Naive thymus-derived CD4-positive, alpha-beta T cell (primary cell): ENCODE measurements at regions of chr19 and their contacts with region 1.

Region 1: DNA sequence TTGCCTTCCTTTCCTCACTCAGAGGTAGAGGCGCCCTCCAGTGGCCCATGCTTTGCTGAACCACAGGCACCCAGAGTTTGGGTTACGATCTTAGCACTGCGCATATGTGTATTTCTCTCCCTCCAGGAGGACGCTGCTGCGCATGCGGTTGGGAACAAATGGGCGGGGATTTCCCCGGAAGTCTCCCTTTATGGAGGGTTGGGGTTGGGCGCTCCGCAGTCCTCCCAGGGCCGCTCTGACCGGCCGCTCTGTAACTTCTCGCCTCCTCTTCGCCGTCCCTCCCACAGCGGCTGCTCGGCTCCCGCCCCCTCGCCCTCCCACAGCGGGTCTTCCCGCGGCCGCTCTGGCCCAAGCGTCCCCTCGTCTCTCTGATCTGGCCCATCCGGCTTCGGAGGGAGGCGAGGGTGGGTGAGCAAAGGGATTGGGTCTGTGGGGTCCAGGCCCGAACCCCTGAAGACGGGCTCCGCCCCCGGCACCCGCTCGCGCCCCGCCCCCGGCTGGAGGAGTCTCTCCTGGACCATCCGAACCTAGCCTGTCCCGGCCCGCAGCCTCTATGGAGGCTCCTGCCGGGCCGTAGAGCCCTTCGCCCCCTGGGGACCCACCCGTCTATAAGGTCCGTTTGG is at the start of gene MEGF8:
- DNase-seq: peak; percentile 86 to 99 (median 97)
- ATAC-seq: peak; percentile 96
- H3K4me3 ChIP-seq: peak within 1 kb of the TSS; percentile 95
- H3K4me3 Mint-ChIP-seq: peak within 1 kb of the TSS; percentile 89 to 96 (median 94)
- H3K27ac ChIP-seq: peak within 1 kb of the TSS; percentile 84
- H3K27ac Mint-ChIP-seq: peak within 1 kb of the TSS; percentile 51 to 93 (median 83)
- H3K4me1 ChIP-seq: peaks cover 6 to 7% of the 10 kb centered on the region in 2 donors
- H3K4me1 Mint-ChIP-seq: peaks cover 13 to 29% (median 22%) of the 10 kb centered on the region in 7 donors
- H3K27me3 ChIP-seq: peaks cover 0 to 4% of the 10 kb centered on the region in 2 donors
- H3K27me3 Mint-ChIP-seq: peaks cover 6 to 33% (median 16%) of the 10 kb centered on the region in 5 donors
- total RNA-seq, gene MEGF8: 6.7 to 9.3 (median 8.6) TPM

Region 2: GRCh38 chr19:41734617-41735016 is 590.8 kb before region 1 on chr19:
- CTCF ChIA-PET with region 1: no interaction called
- POLR2A ChIA-PET with region 1: no interaction called
- intact Hi-C with region 1: no loop called
- DNase-seq: no peak
- ATAC-seq: no peak
- H3K4me3 ChIP-seq: no peak overlapping the region
- H3K4me3 Mint-ChIP-seq: no peak overlapping the region
- H3K27ac ChIP-seq: no peak overlapping the region
- H3K27ac Mint-ChIP-seq: no peak overlapping the region
- H3K4me1 ChIP-seq: no peaks in the 10 kb centered on the region
- H3K4me1 Mint-ChIP-seq: peaks cover 0 to 6% (median 4%) of the 10 kb centered on the region in 7 donors
- H3K27me3 ChIP-seq: no peaks in the 10 kb centered on the region
- H3K27me3 Mint-ChIP-seq: peaks cover 18 to 49% (median 29%) of the 10 kb centered on the region in 5 donors

Region 3: DNA sequence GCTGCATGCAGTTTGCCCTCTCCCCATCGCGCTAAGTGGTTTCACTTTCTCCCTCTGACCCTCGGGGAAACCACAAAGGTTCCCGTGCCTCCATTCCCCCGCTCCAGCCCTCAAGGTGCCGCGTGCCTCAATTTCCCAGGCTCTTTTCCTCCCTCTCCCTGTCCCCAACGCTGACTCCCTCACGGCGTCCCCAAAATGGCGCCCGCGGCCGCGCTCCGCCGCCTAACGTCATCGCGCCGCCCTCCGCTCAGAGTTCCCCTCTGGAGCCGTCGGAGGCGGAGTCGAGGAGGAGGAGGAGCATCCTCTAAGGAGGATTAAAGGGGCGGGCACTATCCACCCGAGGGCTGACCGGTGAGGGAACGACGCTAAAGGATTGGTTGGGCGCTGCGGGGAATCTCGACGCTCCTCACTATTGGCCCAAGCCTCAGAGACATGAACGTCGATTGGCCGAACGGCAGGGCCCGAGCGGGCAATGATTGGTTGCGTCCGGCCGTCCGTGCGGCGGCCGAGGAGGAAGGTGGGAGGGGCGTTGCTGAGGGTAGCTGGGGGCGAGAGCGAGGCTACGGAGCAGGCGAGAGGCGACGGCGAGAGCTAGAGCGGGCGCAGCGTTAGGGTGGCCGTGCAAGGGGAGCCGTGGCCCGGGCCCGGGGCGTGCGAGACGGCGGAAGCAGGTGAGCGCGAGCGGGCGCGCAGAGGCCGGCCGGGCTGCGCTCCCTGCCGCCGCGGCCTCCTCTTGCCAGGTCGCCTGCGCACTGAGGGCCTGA is 249.6 kb before region 1 on chr19 and contains the start of gene ZNF574:
- CTCF ChIA-PET with region 1: no interaction called
- POLR2A ChIA-PET with region 1: no interaction called
- intact Hi-C with region 1: loop called (anchors 1 kb)
- DNase-seq: peak; percentile 91 to 99 (median 98)
- ATAC-seq: peak; percentile 98
- H3K4me3 ChIP-seq: peak within 1 kb of the TSS; percentile 70
- H3K4me3 Mint-ChIP-seq: peak within 1 kb of the TSS; percentile 92 to 100 (median 98)
- H3K27ac ChIP-seq: peak within 1 kb of the TSS; percentile 97
- H3K27ac Mint-ChIP-seq: peak within 1 kb of the TSS; percentile 99 to 100 (median 100)
- H3K4me1 ChIP-seq: peaks cover 19 to 24% of the 10 kb centered on the region in 2 donors
- H3K4me1 Mint-ChIP-seq: peaks cover 26 to 44% (median 38%) of the 10 kb centered on the region in 7 donors
- H3K27me3 ChIP-seq: no peaks in the 10 kb centered on the region
- H3K27me3 Mint-ChIP-seq: peaks cover 0 to 13% (median 0%) of the 10 kb centered on the region in 5 donors
- total RNA-seq, gene ZNF574: 17.6 to 26.7 (median 20.9) TPM

Region 4: DNA sequence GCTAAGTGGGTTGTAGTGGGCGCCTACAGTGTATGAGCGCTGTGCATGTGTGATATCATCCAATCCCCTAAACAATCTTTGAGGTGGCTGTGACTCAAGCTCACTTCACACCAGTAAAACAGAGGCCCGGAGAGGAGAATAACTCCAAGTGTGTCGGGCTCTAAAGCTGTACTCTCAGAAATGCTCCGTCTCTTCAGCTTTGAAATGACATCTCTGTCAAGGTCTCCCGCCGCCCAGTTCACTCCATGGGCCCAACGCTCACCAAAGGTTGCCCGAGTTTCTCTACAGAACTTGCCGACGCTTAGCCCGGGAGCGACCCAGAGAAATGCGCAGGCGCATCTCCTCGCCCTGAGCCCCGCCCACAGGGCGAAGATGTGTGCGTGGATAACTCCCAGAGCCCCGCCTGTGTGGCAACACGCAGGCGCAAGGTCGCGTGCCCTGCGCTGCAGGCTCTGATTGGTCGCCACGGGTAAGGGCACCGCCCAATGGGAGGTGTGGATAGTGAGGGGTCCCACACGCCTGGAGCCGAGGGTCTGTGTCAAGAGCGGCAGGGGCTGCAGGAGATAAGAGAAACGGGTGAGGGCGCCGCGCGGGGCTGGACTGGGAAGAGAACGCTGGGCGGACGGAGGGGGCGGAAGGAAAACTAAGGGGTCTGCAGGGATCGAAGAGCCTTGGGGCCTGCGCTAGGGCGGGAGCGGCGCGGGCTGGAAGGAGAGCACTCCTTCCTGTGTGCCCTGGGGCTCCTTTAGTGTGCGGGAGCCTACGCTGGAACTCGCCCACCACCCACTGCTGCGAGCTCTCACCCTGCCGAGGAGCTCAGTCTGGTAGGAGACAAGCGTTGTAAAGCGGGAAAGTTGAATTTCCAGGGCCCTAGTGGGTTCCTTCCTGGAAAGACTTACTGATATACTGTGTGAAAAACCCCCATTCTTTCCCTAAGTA is 105.3 kb before region 1 on chr19 and contains the start of gene ZNF526:
- CTCF ChIA-PET with region 1: no interaction called
- POLR2A ChIA-PET with region 1: no interaction called
- intact Hi-C with region 1: loop called (anchors 1 kb)
- DNase-seq: peak; percentile 92 to 97 (median 96)
- ATAC-seq: peak; percentile 88
- H3K4me3 ChIP-seq: peak within 1 kb of the TSS; percentile 72
- H3K4me3 Mint-ChIP-seq: peak within 1 kb of the TSS; percentile 95 to 99 (median 98)
- H3K27ac ChIP-seq: peak within 1 kb of the TSS; percentile 88
- H3K27ac Mint-ChIP-seq: peak within 1 kb of the TSS; percentile 88 to 98 (median 95)
- H3K4me1 ChIP-seq: peaks cover 37 to 43% of the 10 kb centered on the region in 2 donors
- H3K4me1 Mint-ChIP-seq: peaks cover 46 to 62% (median 55%) of the 10 kb centered on the region in 7 donors
- H3K27me3 ChIP-seq: no peaks in the 10 kb centered on the region
- H3K27me3 Mint-ChIP-seq: peaks cover 0 to 3% (median 0%) of the 10 kb centered on the region in 5 donors
- total RNA-seq, gene ZNF526: 8.6 to 25.2 (median 22.7) TPM

Region 5: DNA sequence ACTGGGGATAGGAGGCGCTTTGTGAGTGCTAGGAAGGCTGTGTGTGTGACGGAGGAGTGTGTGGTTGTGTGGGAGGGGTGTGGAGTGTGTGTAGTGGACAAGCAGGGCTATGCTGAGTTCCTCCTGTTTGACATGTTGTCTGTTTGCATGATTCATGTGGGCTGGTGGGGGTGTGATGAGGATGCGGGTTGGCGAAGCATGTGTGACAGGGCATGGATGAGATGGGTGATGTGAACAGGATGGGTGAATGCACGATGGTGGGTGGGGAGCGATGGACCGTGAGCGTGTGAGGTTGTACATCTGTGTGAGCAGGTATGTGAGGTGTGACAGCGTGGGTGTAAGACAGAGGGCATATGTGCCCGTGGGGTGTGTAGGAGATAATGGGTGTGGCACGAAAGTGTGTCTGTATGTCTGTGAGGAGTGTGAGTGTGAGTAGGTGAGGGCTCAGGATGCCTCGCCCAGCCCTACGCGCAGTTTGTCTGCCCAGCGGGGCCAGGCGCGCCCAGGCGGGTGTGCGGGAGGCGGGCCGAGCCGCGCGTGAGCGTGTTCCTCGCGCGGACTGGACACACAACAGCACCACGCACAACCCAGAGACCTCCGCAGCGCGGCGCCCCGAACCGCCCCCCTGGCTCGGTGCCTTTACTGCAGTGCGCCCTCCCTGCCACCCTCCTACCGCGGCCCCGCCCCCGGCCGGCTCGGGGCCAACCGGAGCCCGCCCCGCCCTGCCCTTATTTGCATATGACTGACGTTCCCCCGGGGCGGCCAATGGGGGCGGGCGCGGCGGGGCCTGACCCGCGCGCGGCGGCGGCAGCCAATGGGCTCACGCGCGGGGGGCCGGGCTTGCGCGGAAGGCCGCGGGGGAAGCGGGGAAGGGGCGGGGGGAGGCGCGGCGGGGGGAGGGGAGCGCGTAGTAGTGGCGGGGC is 42.0 kb before region 1 on chr19:
- CTCF ChIA-PET with region 1: no interaction called
- POLR2A ChIA-PET with region 1: interaction called, 3 read pairs
- intact Hi-C with region 1: loop called (anchors 1 kb)
- DNase-seq: peak; percentile 93 to 97 (median 95)
- ATAC-seq: peak; percentile 83
- H3K4me3 ChIP-seq: peak overlapping the region; percentile 50
- H3K4me3 Mint-ChIP-seq: peak overlapping the region in 1 of 10 donors; percentile 0
- H3K27ac ChIP-seq: peak overlapping the region; percentile 83
- H3K27ac Mint-ChIP-seq: no peak overlapping the region
- H3K4me1 ChIP-seq: peaks cover 42 to 45% of the 10 kb centered on the region in 2 donors
- H3K4me1 Mint-ChIP-seq: peaks cover 22 to 44% (median 32%) of the 10 kb centered on the region in 7 donors
- H3K27me3 ChIP-seq: no peaks in the 10 kb centered on the region
- H3K27me3 Mint-ChIP-seq: no peaks in the 10 kb centered on the region

Region 6: DNA sequence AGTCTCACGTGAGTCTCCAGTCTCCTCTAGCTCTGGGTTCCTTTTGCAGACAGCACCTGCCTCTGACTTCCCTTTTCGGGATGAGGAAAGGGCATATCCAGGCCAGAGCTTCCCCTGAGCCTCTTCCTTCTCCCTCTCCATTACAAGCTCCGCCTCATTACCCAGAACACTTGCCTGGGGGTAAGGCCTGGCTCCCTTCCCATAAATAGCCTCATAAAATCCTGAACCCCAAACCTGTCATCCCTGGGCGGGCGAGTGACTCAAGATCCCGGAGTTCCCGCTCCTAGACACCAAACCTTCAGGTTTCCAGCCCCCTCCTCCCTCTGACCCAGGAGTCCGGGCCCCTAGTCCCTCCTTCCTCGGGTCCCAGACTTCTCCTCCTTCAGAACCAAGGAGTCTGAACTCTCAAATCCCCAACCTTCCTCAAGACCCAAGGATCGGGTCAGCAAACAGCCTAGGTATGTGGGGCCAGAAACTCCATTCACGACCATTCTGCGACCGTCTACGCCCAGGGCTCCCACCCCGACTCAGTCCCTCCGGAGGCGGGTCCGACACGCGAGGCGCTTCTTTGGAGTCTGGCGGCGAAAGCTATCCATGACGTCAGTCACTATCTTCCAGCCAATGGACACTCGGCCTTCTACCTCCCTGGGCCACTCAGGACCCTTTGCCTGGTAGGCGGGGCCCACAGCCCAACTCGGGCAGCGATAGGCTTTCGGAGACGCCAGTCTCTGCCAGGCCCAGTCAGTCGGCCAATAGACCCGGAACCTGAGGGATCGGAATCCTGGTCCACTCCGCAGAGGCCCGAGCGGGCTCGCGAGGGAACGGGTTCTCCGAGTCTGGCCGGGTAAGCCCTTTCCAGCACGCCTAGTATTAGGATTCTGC is 71.2 kb after region 1 on chr19:
- CTCF ChIA-PET with region 1: no interaction called
- POLR2A ChIA-PET with region 1: no interaction called
- intact Hi-C with region 1: loop called (anchors 1 to 5 kb)
- DNase-seq: peak; percentile 80 to 97 (median 84)
- ATAC-seq: peak; percentile 96
- H3K4me3 ChIP-seq: peak overlapping the region; percentile 93
- H3K4me3 Mint-ChIP-seq: peak overlapping the region; percentile 85 to 99 (median 91)
- H3K27ac ChIP-seq: peak overlapping the region; percentile 70
- H3K27ac Mint-ChIP-seq: peak overlapping the region; percentile 85 to 93 (median 88)
- H3K4me1 ChIP-seq: peaks cover 13 to 16% of the 10 kb centered on the region in 2 donors
- H3K4me1 Mint-ChIP-seq: peaks cover 29 to 49% (median 44%) of the 10 kb centered on the region in 7 donors
- H3K27me3 ChIP-seq: no peaks in the 10 kb centered on the region
- H3K27me3 Mint-ChIP-seq: peaks cover 0 to 8% (median 6%) of the 10 kb centered on the region in 5 donors

Region 7: DNA sequence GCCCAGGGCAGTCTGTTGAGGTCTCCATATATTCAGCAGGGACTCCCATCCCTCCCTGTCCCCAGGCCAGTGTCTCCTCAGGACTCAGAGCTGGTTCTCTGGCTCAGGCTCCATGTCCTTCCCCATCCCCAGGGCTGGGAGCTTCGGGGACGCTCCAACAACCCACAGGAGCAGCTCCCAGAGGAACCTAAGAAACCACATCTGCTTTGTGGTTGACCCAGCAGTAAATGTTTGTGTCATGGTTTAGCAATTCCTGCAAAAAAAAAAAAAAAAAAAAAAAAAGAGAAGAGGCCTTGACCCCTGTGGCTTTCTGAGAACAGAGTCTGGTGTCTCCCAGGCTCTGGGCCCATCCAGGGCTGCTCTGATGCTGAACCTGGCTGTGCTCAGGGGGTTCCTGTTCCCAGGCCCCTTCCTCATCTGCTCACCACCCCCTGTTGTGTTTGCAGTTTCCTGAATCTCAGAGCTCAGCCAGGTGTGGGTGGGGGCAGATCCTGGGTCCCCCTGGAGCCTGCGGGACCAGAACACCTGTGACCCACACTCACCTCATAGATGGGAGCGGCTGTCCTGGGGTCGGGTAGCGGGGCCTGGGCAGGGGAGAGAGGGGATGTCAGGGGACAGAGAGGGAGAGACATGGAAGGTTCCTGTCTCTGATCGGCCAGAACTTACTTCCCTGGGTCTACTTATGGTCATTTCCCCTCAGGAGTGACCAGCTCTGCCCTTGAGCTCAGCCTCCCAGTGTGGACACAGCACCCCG is 228.1 kb after region 1 on chr19:
- CTCF ChIA-PET with region 1: no interaction called
- POLR2A ChIA-PET with region 1: no interaction called
- intact Hi-C with region 1: no loop called
- DNase-seq: no peak
- ATAC-seq: peak; percentile 47
- H3K4me3 ChIP-seq: no peak overlapping the region
- H3K4me3 Mint-ChIP-seq: no peak overlapping the region
- H3K27ac ChIP-seq: no peak overlapping the region
- H3K27ac Mint-ChIP-seq: no peak overlapping the region
- H3K4me1 ChIP-seq: no peaks in the 10 kb centered on the region
- H3K4me1 Mint-ChIP-seq: peaks cover 0 to 14% (median 0%) of the 10 kb centered on the region in 7 donors
- H3K27me3 ChIP-seq: no peaks in the 10 kb centered on the region
- H3K27me3 Mint-ChIP-seq: peaks cover 28 to 42% (median 32%) of the 10 kb centered on the region in 5 donors